ENCODE measurements at regions of chr20 and their contacts with region 1.

Region 1: DNA sequence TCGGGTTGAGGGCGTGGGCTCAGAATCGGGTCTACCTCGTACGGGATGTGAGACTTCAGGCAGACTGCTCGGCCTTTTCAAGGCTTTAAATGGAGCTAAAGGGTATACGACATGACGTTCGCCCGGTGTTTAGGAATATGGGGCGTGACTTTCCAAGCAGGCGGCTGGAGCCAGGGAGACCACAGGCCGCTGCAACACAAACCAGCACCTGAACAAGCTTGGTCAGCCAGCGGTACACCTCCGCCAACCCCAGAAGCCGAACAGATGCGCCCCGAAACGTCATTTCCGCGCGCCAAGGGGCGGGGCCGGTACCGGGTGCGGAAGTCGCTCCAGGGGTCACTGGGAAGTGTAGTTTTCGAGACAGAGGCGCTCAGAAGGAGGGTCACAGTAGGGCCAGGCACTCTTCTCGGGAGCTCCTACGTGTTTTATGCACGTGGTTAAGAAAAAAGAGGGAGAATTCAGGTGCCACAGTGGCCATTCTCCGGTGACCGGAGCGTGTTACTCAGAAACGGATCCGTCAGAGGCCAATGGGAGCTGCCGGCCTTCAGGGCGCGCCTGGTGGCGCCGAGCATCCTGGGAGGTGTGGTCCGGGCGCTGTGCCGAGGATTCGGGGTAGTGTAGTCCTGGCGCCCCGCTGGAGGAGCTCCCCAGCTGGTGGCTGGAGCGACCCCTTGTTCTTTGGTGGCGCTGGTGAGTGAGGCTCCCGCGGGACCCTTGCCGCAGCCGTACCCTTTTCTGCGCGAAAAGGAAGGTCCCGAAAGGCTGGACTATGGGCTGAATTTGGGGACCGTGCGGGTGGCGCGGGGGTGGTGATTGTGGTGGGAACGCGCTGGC is at the start of gene ZNF133:
- DNase-seq: peak; percentile 98
- total RNA-seq, gene ZNF133: 6.0 TPM

Region 2: GRCh38 chr20:18137412-18138265 is 150.5 kb before region 1 on chr20 and contains the starts of genes KAT14 and PET117:
- intact Hi-C with region 1: loop called (anchors 5 kb)
- DNase-seq: peak; percentile 95
- total RNA-seq, gene KAT14: 9.7 TPM
- total RNA-seq, gene PET117: 11.0 TPM

Region 3: DNA sequence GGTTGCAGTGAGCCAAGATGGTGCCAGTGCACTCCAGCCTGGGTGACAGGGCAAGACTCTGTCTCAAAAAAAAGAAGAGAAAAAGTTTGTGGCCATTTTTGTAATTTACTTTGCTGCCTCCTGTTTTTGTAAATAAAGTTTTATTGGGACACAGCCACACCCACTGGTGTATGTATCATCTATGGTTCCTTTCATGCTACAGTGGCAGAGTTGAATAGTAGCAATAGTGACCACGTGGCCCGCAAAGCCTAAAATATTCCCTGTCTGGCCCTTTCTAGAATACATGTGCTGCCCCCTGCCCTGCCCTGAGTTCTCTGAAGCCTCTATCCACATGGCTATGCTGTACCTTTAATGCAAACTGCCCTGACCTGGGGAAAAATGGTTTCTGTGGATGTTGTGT is 75.1 kb before region 1 on chr20:
- intact Hi-C with region 1: no loop called
- DNase-seq: no peak

Region 4: GRCh38 chr20:18466894-18467730 is 179.0 kb after region 1 on chr20 and contains the starts of genes DZANK1 and POLR3F:
- intact Hi-C with region 1: loop called (anchors 2 kb)
- DNase-seq: peak; percentile 97
- total RNA-seq, gene DZANK1: 0.38 TPM
- total RNA-seq, gene POLR3F: 7.2 TPM